Psoas muscle (tissue), 8 donors: ENCODE measurements at regions of chr5 and their contacts with region 1.

Region 1: GRCh38 chr5:173887610-173888472 is at the start of gene CPEB4:
- DNase-seq: peak; percentile 98 to 99
- ATAC-seq: peak; percentile 89 to 94 (median 93)
- H3K4me3 ChIP-seq: peak within 1 kb of the TSS; percentile 86
- H3K27ac ChIP-seq: peak within 1 kb of the TSS; percentile 94
- H3K4me1 ChIP-seq: peaks cover 5% of the 10 kb centered on the region
- H3K27me3 ChIP-seq: no peaks in the 10 kb centered on the region
- CTCF ChIP-seq: no peak
- total RNA-seq, gene CPEB4: 95.0 to 262 (median 225) TPM

Region 2: DNA sequence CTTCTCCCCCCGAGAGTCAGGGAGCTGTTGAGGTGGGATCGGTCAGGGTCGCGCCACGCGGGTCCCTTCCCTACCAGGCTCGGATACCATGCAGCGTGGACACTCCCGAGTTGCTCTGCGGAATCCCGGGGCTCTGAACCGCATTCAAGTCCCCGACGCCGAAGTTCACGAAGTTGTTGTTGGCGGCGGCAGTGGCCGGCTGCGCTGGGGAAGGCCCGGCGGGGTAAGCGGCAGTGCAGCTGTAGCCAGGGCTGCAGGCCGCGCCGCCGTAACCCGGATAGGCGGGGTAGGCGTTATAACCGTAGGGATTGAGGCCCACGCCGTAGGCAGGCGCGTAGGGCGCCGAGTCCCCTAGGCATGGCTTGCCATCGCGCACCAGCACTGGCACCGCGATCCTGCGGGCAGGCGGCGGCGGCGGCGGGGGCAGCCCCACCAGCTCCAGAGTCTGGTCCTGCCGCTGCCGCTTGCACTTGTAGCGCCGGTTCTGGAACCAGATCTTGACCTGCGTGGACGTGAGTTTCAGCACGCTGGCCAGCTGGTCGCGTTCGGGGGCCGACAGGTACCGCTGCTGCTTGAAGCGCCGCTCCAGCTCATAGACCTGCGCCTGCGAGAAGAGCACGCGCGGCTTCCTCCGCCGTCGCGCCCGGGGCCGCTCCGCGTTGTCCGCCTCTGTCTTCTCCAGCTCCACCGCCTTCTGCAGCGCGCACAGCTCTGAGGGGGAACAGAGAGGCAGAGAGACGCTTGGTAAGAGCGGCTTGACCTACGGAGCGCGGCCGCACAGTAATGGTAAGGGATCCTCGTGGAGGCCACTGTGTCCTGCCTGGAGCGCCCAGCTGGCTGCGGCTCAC is 655.1 kb before region 1 on chr5:
- intact Hi-C with region 1: no loop called
- DNase-seq: no peak
- ATAC-seq: peak in 3 of 4 donors; percentile 33 to 72 (median 45)
- H3K4me3 ChIP-seq: peak overlapping the region; percentile 41
- H3K27ac ChIP-seq: no peak overlapping the region
- H3K4me1 ChIP-seq: peaks cover 14% of the 10 kb centered on the region
- H3K27me3 ChIP-seq: peaks cover 4 to 97% (median 56%) of the 10 kb centered on the region in 3 donors
- CTCF ChIP-seq: no peak

Region 3: DNA sequence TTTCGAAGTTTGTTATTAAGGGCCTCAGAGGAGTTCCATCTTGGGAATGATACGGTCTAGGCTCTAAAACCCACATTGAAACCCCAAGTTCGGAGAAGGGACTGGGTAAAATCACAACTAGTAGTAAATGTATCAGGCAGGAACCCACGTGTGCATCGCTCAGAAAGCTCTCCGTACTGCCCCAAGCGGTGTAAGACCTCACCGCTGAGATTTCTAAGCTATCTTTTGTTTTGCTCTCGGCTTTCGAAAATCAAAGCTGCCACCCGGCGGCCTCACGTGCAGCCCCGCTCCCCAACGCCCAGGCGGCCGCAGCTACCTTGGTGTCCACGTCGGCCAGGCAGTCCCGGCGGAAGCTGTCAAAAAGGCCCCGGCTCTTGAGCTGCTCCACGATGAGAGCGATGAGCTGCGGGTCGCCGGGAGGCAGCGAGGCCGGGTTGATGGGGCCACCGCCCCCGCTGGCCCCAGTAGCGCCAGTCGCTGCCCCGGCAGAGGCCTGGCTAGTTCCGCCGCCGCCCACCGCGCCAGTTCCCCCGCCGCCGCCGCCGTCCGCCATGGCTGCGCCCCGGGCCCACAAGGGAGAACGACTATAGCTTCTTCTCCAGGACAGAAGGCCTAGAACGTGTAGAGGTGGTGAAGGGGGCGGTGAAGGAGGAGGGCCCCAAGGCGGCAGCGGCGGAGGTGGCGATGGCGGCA is 271.8 kb before region 1 on chr5:
- intact Hi-C with region 1: loop called (anchors 2 to 5 kb)
- DNase-seq: peak; percentile 49 to 81
- ATAC-seq: peak; percentile 72 to 78 (median 74)
- H3K4me3 ChIP-seq: peak overlapping the region; percentile 88
- H3K27ac ChIP-seq: peak overlapping the region; percentile 97
- H3K4me1 ChIP-seq: peaks cover 53% of the 10 kb centered on the region
- H3K27me3 ChIP-seq: no peaks in the 10 kb centered on the region
- CTCF ChIP-seq: peak; percentile 69

Region 4: DNA sequence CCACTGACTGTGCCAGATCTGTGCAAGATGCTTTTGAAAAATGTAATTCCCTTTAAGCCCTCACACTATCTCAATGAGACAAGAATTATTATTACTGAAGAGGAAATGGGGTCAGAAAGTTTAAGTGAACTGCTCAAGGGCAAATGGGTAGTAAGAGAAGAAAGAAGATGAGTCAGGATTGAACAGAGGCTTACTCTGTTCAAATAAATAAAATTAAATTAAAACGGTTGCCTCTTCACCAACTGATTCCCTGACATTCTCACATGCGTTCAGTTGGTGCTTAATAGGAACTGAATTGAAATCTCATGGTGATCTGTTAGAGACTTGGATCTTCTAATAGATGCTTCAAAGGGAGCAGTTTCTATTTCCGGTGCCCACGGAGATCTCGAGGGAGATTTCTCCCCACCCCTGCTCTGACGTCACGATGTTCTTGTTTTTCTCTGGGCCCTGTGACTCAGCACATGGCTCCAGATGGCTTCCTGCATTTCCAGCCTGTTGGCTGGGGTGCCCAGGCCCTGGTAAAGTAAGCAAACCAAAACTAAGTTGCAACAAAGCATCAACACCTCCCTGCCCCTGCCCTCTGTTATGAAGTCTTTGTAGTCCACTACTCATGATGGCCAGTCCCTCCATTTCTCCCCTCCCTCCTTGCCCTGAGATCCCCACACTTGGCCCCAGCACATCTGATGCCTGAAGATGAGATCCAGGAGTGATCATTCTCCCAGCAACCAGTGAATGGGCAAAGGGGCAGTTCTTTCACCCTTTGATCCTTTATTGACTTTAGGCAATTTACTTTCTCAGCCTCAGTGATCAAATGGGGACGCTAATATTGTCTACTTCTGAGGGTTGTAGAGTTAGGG is 105.8 kb before region 1 on chr5:
- intact Hi-C with region 1: loop called (anchors 5 kb)
- DNase-seq: peak; percentile 85 to 92
- ATAC-seq: peak; percentile 92 to 98 (median 95)
- H3K4me3 ChIP-seq: no peak overlapping the region
- H3K27ac ChIP-seq: peak overlapping the region; percentile 72
- H3K4me1 ChIP-seq: peaks cover 24% of the 10 kb centered on the region
- H3K27me3 ChIP-seq: no peaks in the 10 kb centered on the region
- CTCF ChIP-seq: no peak

Region 5: GRCh38 chr5:173835131-173835530 is 52.7 kb before region 1 on chr5:
- intact Hi-C with region 1: loop called in 1 of 2 experiments (anchors 2 kb)
- DNase-seq: no peak
- ATAC-seq: peak in 3 of 4 donors; percentile 9 to 32 (median 17)
- H3K4me3 ChIP-seq: no peak overlapping the region
- H3K27ac ChIP-seq: peak overlapping the region; percentile 62
- H3K4me1 ChIP-seq: peaks cover 32% of the 10 kb centered on the region
- H3K27me3 ChIP-seq: no peaks in the 10 kb centered on the region
- CTCF ChIP-seq: no peak

Region 6: DNA sequence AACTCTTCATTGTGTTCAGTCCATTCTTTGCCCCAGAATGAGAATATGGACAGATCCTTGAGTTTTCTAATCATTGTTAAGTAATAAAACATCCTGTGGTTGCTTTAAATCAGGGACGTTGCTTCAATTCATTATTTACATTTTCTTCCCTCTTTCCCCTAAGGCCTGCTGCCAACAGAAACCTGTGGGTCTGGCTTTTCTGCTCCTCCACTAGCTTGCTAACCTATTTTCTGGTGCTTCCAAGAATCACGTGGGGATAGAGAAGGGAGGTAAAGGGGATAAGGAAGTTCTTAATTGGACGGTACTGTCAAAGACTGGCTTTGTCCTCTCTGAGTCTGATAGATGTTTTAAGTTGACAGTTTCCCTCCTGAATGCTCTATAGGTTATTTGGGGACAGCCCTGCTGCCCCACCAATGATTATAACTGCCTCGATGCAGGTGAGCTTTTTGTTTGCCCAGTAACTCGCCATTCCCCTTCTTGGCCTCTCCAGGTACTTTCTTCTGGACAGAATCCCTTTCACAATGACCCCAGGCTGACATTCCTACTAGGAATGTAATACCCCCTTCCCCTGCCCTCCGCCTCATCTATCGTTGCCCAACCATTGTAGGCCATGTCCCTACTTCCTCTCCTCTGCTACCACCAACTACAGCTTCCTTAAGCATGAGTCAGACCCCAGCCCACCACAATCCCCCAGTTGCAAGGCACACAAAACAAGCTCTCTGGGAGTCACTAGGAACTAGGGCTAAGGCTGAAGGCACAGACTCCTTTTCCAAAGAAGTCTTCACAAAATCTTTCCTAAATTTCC is 19.6 kb before region 1 on chr5:
- intact Hi-C with region 1: no loop called
- DNase-seq: no peak
- ATAC-seq: no peak
- H3K4me3 ChIP-seq: no peak overlapping the region
- H3K27ac ChIP-seq: no peak overlapping the region
- H3K4me1 ChIP-seq: no peaks in the 10 kb centered on the region
- H3K27me3 ChIP-seq: no peaks in the 10 kb centered on the region
- CTCF ChIP-seq: no peak

Region 7: GRCh38 chr5:173963867-173964441 is 76.1 kb after region 1 on chr5:
- intact Hi-C with region 1: loop called (anchors 5 kb)
- DNase-seq: no peak
- ATAC-seq: peak; percentile 18 to 35 (median 32)
- H3K4me3 ChIP-seq: peak overlapping the region; percentile 42
- H3K27ac ChIP-seq: peak overlapping the region; percentile 91
- H3K4me1 ChIP-seq: peaks cover 43% of the 10 kb centered on the region
- H3K27me3 ChIP-seq: no peaks in the 10 kb centered on the region
- CTCF ChIP-seq: no peak